Right lobe of liver (tissue), 6 donors: ENCODE measurements at regions of chr9 and their contacts with region 1.

Region 1: GRCh38 chr9:89323390-89323789 is 5.1 kb downstream of the SECISBP2 start:
- DNase-seq: no peak
- ATAC-seq: no peak
- H3K4me3 ChIP-seq: no peak overlapping the region
- H3K27ac ChIP-seq: no peak overlapping the region
- H3K4me1 ChIP-seq: peaks cover 0 to 21% (median 6%) of the 10 kb centered on the region in 4 donors
- H3K27me3 ChIP-seq: no peaks in the 10 kb centered on the region
- CTCF ChIP-seq: no peak
- POLR2A ChIP-seq: no peak

Region 2: GRCh38 chr9:89549031-89549644 is 225.7 kb after region 1 on chr9:
- intact Hi-C with region 1: loop called in 1 of 2 experiments (anchors 10 kb)
- DNase-seq: peak; percentile 82 to 84 (median 83)
- ATAC-seq: peak; percentile 98 to 100 (median 100)
- H3K4me3 ChIP-seq: no peak overlapping the region
- H3K27ac ChIP-seq: no peak overlapping the region
- H3K4me1 ChIP-seq: no peaks in the 10 kb centered on the region
- H3K27me3 ChIP-seq: no peaks in the 10 kb centered on the region
- CTCF ChIP-seq: peak; percentile 85 to 99 (median 98)
- POLR2A ChIP-seq: no peak